Heart right ventricle (tissue), 16 donors: ENCODE measurements at regions of chr2 and their contacts with region 1.

Region 1: DNA sequence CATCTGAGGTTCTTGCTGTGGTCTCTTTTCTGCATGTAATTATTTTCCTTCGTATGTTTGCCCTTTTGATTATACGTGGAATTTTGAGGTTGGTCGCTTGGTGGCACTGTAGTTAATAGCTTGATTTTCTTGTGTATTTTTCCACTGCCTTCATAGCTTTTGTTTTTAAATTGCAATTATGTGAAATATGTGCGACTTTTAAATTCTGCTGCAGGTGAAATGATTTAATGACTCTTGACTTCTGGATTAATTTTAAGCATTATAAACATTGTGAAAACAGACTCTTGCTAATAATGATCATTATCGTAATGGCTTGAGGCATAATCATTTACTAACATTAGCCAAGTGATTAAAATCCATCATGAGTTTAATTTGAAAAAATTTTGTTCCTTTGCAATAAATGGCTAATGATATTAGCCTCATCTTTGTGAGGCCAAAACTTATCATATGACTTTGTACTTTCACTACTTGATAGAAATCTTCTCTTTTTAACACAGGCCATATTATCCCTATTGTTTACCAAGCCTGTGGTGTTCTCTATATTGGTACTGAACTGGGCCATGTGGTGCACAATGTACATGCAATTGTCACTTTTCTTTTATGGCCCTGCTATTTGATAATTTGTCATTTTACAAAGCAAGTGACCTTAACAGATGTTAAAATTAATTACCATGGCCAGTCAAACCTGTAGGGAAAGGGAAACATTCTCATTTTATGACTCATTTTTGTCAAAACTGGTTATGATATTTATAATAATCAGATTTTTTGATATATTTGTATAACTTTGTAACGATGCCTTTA is 62.8 kb upstream of the NEUROD1 start:
- DNase-seq: peak in 1 of 2 donors; percentile 51
- ATAC-seq: no peak
- H3K4me3 ChIP-seq: no peak overlapping the region
- H3K27ac ChIP-seq: no peak overlapping the region
- H3K4me1 ChIP-seq: peaks cover 0 to 12% (median 0%) of the 10 kb centered on the region in 9 donors
- H3K27me3 ChIP-seq: no peaks in the 10 kb centered on the region
- CTCF ChIP-seq: peak; percentile 39 to 84 (median 70)

Region 2: GRCh38 chr2:181904022-181904632 is 161.0 kb after region 1 on chr2:
- intact Hi-C with region 1: loop called in 8 of 10 experiments (anchors 1 to 10 kb)
- DNase-seq: peak in 1 of 2 donors; percentile 9
- ATAC-seq: peak in 1 of 8 donors; percentile 58
- H3K4me3 ChIP-seq: no peak overlapping the region
- H3K27ac ChIP-seq: peak overlapping the region in 1 of 10 donors; percentile 36
- H3K4me1 ChIP-seq: peaks cover 0 to 83% (median 54%) of the 10 kb centered on the region in 9 donors
- H3K27me3 ChIP-seq: no peaks in the 10 kb centered on the region
- CTCF ChIP-seq: peak; percentile 37 to 78 (median 66)

Region 3: GRCh38 chr2:182077451-182078142 is 334.5 kb after region 1 on chr2:
- intact Hi-C with region 1: loop called (anchors 1 to 10 kb)
- DNase-seq: peak in 1 of 2 donors; percentile 68
- ATAC-seq: peak; percentile 76 to 96 (median 90)
- H3K4me3 ChIP-seq: no peak overlapping the region
- H3K27ac ChIP-seq: peak overlapping the region in 1 of 10 donors; percentile 14
- H3K4me1 ChIP-seq: peaks cover 0 to 11% (median 5%) of the 10 kb centered on the region in 9 donors
- H3K27me3 ChIP-seq: no peaks in the 10 kb centered on the region
- CTCF ChIP-seq: peak; percentile 47 to 80 (median 66)

Region 4: DNA sequence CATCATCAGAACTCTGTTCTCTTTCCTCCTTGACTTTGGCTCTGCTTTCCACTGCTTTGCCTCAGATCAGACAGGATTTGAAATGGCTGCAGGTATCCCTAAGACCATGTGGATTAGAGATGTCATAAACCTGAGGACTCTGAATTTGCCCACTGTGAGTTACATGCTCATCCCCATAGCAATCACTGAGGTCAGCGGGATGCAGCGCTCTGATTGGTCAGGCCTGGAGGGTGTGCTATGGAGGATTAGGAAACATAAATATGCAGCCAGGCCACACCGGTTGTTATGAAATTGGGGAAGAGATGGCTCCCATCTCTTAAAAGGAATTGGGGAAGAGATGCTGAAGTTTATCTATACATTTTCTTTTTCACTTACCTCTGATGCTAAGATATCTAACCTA is 899.2 kb after region 1 on chr2:
- intact Hi-C with region 1: loop called in 1 of 10 experiments (anchors 10 kb)
- DNase-seq: peak; percentile 36 to 50
- ATAC-seq: peak in 6 of 8 donors; percentile 51 to 85 (median 62)
- H3K4me3 ChIP-seq: no peak overlapping the region
- H3K27ac ChIP-seq: no peak overlapping the region
- H3K4me1 ChIP-seq: no peaks in the 10 kb centered on the region
- H3K27me3 ChIP-seq: no peaks in the 10 kb centered on the region
- CTCF ChIP-seq: no peak